ENCODE measurements at regions of chr9 and their contacts with region 1.

Region 1: GRCh38 chr9:6655036-6655435 is 9.5 kb upstream of the GLDC start:
- DNase-seq: no peak
- ATAC-seq: no peak
- H3K4me3 ChIP-seq: no peak overlapping the region
- H3K4me3 Mint-ChIP-seq: peak overlapping the region; percentile 45
- H3K27ac ChIP-seq: no peak overlapping the region
- H3K27ac Mint-ChIP-seq: no peak overlapping the region
- H3K4me1 ChIP-seq: no peaks in the 10 kb centered on the region
- H3K4me1 Mint-ChIP-seq: peaks cover 5% of the 10 kb centered on the region
- H3K27me3 ChIP-seq: no peaks in the 10 kb centered on the region
- H3K27me3 Mint-ChIP-seq: peaks cover 28% of the 10 kb centered on the region
- CTCF ChIP-seq: no peak

Region 2: GRCh38 chr9:5949103-5949699 is 705.8 kb before region 1 on chr9:
- CTCF ChIA-PET with region 1: no interaction called
- POLR2A ChIA-PET with region 1: no interaction called
- intact Hi-C with region 1: no loop called
- DNase-seq: peak in 8 of 14 experiments; percentile 2 to 76 (median 17)
- ATAC-seq: peak; percentile 93
- H3K4me3 ChIP-seq: peak overlapping the region; percentile 2
- H3K4me3 Mint-ChIP-seq: peak overlapping the region; percentile 80
- H3K27ac ChIP-seq: no peak overlapping the region
- H3K27ac Mint-ChIP-seq: peak overlapping the region; percentile 81
- H3K4me1 ChIP-seq: no peaks in the 10 kb centered on the region
- H3K4me1 Mint-ChIP-seq: peaks cover 27% of the 10 kb centered on the region
- H3K27me3 ChIP-seq: no peaks in the 10 kb centered on the region
- H3K27me3 Mint-ChIP-seq: no peaks in the 10 kb centered on the region
- CTCF ChIP-seq: no peak

Region 3: DNA sequence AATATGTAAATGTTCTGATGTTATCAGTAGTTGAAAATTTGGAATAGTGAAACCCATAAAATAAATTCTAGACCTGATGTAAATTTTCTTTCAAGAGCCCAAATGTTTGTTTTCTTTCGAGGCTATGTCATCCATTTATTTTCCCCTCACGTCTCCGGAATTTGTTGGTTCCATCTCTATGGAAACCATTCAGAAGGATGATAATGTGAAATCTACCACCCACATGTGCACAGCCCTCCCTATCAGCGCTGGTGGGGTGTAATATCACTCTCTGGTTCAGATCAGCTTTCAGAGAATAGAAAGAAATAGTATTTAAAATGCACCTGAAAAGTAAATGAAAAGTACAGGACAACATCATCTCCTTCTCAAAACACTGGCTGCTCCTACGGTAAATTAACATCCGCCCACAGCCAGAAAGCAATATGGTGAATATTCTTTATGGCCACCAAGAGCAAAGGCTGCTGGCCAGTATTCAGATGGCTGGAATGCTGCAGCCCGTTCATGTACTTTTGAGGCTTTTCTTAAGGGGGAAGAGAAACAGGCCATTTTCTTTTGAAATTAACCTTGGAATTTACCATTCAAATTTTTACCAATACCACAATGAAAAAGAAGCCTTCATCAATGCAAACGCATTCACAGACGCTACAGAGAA is 38.0 kb before region 1 on chr9:
- CTCF ChIA-PET with region 1: no interaction called
- POLR2A ChIA-PET with region 1: no interaction called
- intact Hi-C with region 1: no loop called
- DNase-seq: no peak
- ATAC-seq: no peak
- H3K4me3 ChIP-seq: no peak overlapping the region
- H3K4me3 Mint-ChIP-seq: no peak overlapping the region
- H3K27ac ChIP-seq: no peak overlapping the region
- H3K27ac Mint-ChIP-seq: no peak overlapping the region
- H3K4me1 ChIP-seq: no peaks in the 10 kb centered on the region
- H3K4me1 Mint-ChIP-seq: no peaks in the 10 kb centered on the region
- H3K27me3 ChIP-seq: no peaks in the 10 kb centered on the region
- H3K27me3 Mint-ChIP-seq: peaks cover 17% of the 10 kb centered on the region
- CTCF ChIP-seq: no peak

Region 4: GRCh38 chr9:6667633-6668280 is 12.7 kb after region 1 on chr9:
- CTCF ChIA-PET with region 1: no interaction called
- POLR2A ChIA-PET with region 1: no interaction called
- intact Hi-C with region 1: no loop called
- DNase-seq: peak in 3 of 14 experiments; percentile 24 to 39 (median 34)
- ATAC-seq: no peak
- H3K4me3 ChIP-seq: no peak overlapping the region
- H3K4me3 Mint-ChIP-seq: no peak overlapping the region
- H3K27ac ChIP-seq: no peak overlapping the region
- H3K27ac Mint-ChIP-seq: no peak overlapping the region
- H3K4me1 ChIP-seq: no peaks in the 10 kb centered on the region
- H3K4me1 Mint-ChIP-seq: no peaks in the 10 kb centered on the region
- H3K27me3 ChIP-seq: no peaks in the 10 kb centered on the region
- H3K27me3 Mint-ChIP-seq: no peaks in the 10 kb centered on the region
- CTCF ChIP-seq: peak; percentile 49

Region 5: DNA sequence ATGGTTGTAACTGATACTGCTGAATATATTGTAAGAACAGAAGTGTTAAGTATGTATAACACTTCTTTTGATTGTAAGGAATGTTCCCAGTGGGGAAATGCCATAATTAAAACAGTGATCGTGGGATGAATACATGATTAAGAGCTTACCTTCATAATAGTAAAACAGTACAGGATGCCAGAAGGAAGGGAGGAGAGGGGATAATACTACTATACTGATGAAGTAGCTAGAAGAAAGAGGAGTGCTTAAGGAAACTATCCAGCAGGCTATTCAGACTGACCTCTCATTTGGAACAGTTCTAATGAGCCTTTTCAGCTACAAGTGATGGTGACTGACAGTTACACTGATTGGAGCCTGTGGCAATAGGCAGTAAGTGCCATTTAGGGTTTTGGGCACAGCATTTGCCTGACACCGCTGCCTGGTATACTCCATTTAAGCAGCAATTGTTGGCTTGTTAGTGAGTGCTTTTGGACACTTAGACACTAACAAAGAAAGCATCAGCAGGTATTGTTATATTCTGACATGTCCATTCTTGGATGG is 68.9 kb after region 1 on chr9:
- CTCF ChIA-PET with region 1: no interaction called
- POLR2A ChIA-PET with region 1: no interaction called
- intact Hi-C with region 1: loop called in 1 of 2 experiments (anchors 2 kb)
- DNase-seq: no peak
- ATAC-seq: no peak
- H3K4me3 ChIP-seq: no peak overlapping the region
- H3K4me3 Mint-ChIP-seq: no peak overlapping the region
- H3K27ac ChIP-seq: no peak overlapping the region
- H3K27ac Mint-ChIP-seq: no peak overlapping the region
- H3K4me1 ChIP-seq: no peaks in the 10 kb centered on the region
- H3K4me1 Mint-ChIP-seq: no peaks in the 10 kb centered on the region
- H3K27me3 ChIP-seq: no peaks in the 10 kb centered on the region
- H3K27me3 Mint-ChIP-seq: no peaks in the 10 kb centered on the region
- CTCF ChIP-seq: no peak